Activated CD4-positive, alpha-beta T cell treated with anti-CD3 and anti-CD28 coated beads, Interleukin-2, amount 10 ng/mL, durations not matched to agents 7 days and 5 days (primary cell): ENCODE measurements at regions of chr22 and their contacts with region 1.

Region 1: DNA sequence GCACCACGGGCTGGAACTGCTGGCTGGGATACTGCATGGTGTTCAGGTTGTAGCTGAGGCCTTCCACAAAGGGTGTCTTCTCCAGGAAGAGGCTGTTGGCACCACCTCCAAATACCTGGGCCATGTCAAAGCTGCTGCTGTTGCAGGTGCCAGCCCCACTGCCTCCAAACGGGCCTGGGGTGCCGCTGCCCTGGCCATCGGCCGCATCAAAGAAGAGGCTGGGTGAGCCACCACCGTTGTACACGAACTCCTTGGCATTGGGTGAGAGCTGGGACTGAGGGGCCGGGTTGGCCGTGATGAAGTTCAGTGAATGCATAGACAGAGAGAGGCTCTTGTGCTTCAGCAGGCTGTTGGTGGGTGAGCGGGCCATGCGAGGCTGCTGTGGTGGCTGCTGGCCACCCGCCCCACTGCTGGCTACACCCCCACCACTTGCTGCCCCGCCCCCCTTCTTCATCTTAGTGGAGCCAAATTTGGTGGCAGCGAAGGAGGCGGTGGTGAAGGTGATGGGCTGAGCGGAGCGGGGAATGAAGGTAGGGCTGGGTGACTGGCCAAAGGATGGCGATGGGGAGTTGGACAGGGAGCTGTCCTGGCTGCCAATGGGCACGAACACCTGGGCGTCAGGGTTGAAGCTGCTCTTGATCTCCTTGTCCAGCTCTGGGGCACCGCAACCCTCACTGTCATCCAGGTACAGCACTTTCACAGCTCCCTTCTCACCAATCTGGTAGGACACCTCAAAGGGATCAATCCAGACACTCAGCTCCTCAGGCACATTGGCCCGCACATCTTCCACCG is 10.1 kb downstream of the TOB2 start:
- DNase-seq: no peak
- H3K4me3 Mint-ChIP-seq: no peak overlapping the region
- H3K27ac Mint-ChIP-seq: no peak overlapping the region
- H3K4me1 Mint-ChIP-seq: peaks cover 2% of the 10 kb centered on the region
- H3K27me3 Mint-ChIP-seq: no peaks in the 10 kb centered on the region

Region 2: GRCh38 chr22:41394012-41394356 is 42.5 kb before region 1 on chr22:
- CTCF ChIA-PET with region 1: no interaction called
- POLR2A ChIA-PET with region 1: no interaction called
- DNase-seq: no peak
- H3K4me3 Mint-ChIP-seq: no peak overlapping the region
- H3K27ac Mint-ChIP-seq: no peak overlapping the region
- H3K4me1 Mint-ChIP-seq: no peaks in the 10 kb centered on the region
- H3K27me3 Mint-ChIP-seq: no peaks in the 10 kb centered on the region

Region 3: GRCh38 chr22:41425660-41426365 is 10.7 kb before region 1 on chr22:
- CTCF ChIA-PET with region 1: interaction called, 11 read pairs
- POLR2A ChIA-PET with region 1: no interaction called
- DNase-seq: peak; percentile 64
- H3K4me3 Mint-ChIP-seq: peak overlapping the region; percentile 36
- H3K27ac Mint-ChIP-seq: peak overlapping the region; percentile 87
- H3K4me1 Mint-ChIP-seq: peaks cover 14% of the 10 kb centered on the region
- H3K27me3 Mint-ChIP-seq: no peaks in the 10 kb centered on the region